Activated T-helper 1 cell treated with anti-CD3 and anti-CD28 coated beads, Interleukin-12 subunit alpha, Interleukin-12 subunit beta, Interleukin-2, Interleukin-4 antibody, amounts not matched to agents 30 ng/mL and 10 ng/mL and 1 ng/mL, durations not matched to agents 14 hours and 24 hours and 36 hours (primary cell): ENCODE measurements at regions of chr15 and their contacts with region 1.

Region 1: GRCh38 chr15:66504563-66505429 is at the starts of genes RPL4 and ZWILCH:
- DNase-seq: peak; percentile 77
- H3K4me3 Mint-ChIP-seq: peak within 1 kb of the TSS; percentile 99
- H3K27ac Mint-ChIP-seq: peak within 1 kb of the TSS; percentile 99
- H3K4me1 Mint-ChIP-seq: peaks cover 55% of the 10 kb centered on the region
- H3K27me3 Mint-ChIP-seq: no peaks in the 10 kb centered on the region
- total RNA-seq, gene RPL4: 3,069 and 3,091 TPM in 2 replicates
- total RNA-seq, gene ZWILCH: 37.5 and 42.2 TPM in 2 replicates

Region 2: DNA sequence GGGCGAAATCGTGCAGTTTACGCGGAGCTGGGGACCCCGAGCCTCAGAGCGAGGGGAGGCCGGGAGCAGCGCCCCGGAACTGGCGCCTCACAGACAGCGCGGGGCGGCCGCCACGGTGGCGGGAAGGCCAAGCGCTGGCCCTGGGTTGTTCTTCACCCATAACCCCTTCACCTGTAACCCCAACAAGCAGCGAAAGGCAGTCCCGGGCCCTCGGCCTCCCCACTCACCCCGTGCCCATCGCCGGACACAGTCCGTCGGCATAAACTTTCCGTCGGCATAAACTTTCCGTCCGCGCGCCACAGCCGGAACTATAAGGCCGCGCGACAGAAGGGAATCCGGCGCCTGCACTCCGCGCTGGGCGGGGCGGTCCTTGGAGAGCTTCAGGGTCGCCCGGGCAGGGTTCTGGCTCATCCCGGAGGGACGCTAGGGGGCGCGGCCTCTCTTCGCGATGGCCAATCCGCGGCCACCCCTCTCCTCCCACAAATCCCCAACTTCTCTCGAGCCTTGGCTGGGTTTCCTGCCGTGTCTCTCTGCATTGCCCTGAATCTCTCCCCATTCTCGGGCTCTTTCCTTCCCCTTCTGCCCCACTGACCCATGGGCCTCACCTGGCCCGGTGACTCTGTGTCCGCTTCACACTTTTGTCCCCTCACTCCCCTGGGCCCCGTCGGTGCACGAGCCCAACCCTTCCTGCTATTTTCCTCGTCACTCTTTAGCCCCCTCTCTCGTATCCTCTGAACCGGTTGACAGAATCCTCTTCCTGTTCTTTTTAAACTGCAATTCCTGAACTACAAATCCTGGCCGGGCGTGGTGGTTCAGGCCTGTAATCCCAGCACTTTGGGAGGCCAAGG is 893.7 kb before region 1 on chr15 and contains the start of gene INTS14:
- intact Hi-C with region 1: loop called (anchors 1 kb)
- DNase-seq: peak; percentile 89
- H3K4me3 Mint-ChIP-seq: peak within 1 kb of the TSS; percentile 90
- H3K27ac Mint-ChIP-seq: peak within 1 kb of the TSS; percentile 96
- H3K4me1 Mint-ChIP-seq: peaks cover 36% of the 10 kb centered on the region
- H3K27me3 Mint-ChIP-seq: no peaks in the 10 kb centered on the region
- total RNA-seq, gene INTS14: 47.4 and 53.3 TPM in 2 replicates

Region 3: GRCh38 chr15:66566963-66567531 is 62.3 kb after region 1 on chr15:
- intact Hi-C with region 1: loop called (anchors 1 kb)
- DNase-seq: peak; percentile 24
- H3K4me3 Mint-ChIP-seq: peak overlapping the region; percentile 19
- H3K27ac Mint-ChIP-seq: no peak overlapping the region
- H3K4me1 Mint-ChIP-seq: peaks cover 12% of the 10 kb centered on the region
- H3K27me3 Mint-ChIP-seq: no peaks in the 10 kb centered on the region

Region 4: GRCh38 chr15:67254238-67255175 is 749.7 kb after region 1 on chr15 and contains the starts of genes AAGAB and IQCH:
- intact Hi-C with region 1: loop called (anchors 10 kb)
- DNase-seq: peak; percentile 98
- H3K4me3 Mint-ChIP-seq: peak within 1 kb of the TSS; percentile 100
- H3K27ac Mint-ChIP-seq: peak within 1 kb of the TSS; percentile 98
- H3K4me1 Mint-ChIP-seq: peaks cover 36% of the 10 kb centered on the region
- H3K27me3 Mint-ChIP-seq: peaks cover 18% of the 10 kb centered on the region
- total RNA-seq, gene AAGAB: 41.7 and 44.0 TPM in 2 replicates
- total RNA-seq, gene IQCH: 0.88 and 1.2 TPM in 2 replicates